ENCODE measurements at regions of chr7 and their contacts with region 1.

Region 1: GRCh38 chr7:992709-993607 is 10.0 kb downstream of the CYP2W1 start:
- DNase-seq: peak; percentile 96 to 99
- H3K4me3 ChIP-seq: no peak overlapping the region
- H3K27ac ChIP-seq: no peak overlapping the region
- H3K4me1 ChIP-seq: peaks cover 0 to 19% of the 10 kb centered on the region in 2 donors
- H3K27me3 ChIP-seq: no peaks in the 10 kb centered on the region
- CTCF ChIP-seq: peak; percentile 96 to 100 (median 100)
- POLR2A ChIP-seq: no peak

Region 2: GRCh38 chr7:1065263-1066260 is 72.6 kb after region 1 on chr7:
- intact Hi-C with region 1: loop called (anchors 2 kb)
- DNase-seq: peak; percentile 91
- H3K4me3 ChIP-seq: no peak overlapping the region
- H3K27ac ChIP-seq: peak overlapping the region in 1 of 3 donors; percentile 15
- H3K4me1 ChIP-seq: peaks cover 16 to 20% of the 10 kb centered on the region in 2 donors
- H3K27me3 ChIP-seq: no peaks in the 10 kb centered on the region
- CTCF ChIP-seq: peak; percentile 86 to 97 (median 92)
- POLR2A ChIP-seq: no peak

Region 3: GRCh38 chr7:1175967-1176851 is 183.3 kb after region 1 on chr7:
- intact Hi-C with region 1: loop called (anchors 5 kb)
- DNase-seq: peak; percentile 82 to 85
- H3K4me3 ChIP-seq: no peak overlapping the region
- H3K27ac ChIP-seq: no peak overlapping the region
- H3K4me1 ChIP-seq: peaks cover 0 to 8% of the 10 kb centered on the region in 2 donors
- H3K27me3 ChIP-seq: no peaks in the 10 kb centered on the region
- CTCF ChIP-seq: peak; percentile 78 to 97 (median 90)
- POLR2A ChIP-seq: no peak